ENCODE measurements at regions of chr12 and their contacts with region 1.

Region 1: DNA sequence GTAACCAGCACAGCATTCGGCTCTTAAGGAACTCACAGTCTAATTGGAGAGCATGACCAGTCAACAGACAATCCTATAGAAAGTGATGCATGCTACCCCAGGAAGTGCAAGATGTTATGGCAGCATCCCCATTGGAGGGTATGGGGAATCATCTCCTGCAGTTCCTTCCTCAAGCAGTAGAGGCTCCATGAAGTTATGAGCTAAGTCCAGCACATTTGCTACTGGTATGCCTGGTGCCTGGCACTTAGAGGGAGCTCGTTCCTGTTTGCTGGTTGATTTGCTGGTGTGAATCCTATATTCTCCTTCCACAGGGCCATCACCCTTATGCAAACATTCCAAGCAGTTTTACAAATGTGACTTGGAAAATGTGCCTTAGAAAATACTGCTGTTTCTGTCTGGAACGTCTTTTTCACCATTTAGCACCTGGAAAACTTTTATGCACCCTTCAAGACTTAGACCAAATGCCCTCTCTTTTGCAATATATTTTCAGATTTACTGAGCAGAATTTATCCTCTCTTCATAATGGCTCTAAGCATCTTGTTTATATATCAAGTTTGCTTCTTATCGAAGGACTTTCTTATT is 136.1 kb upstream of the WSCD2 start:
- DNase-seq: no peak
- ATAC-seq: peak; percentile 31
- H3K4me3 Mint-ChIP-seq: no peak overlapping the region
- H3K27ac Mint-ChIP-seq: no peak overlapping the region
- H3K4me1 Mint-ChIP-seq: no peaks in the 10 kb centered on the region
- H3K27me3 Mint-ChIP-seq: peaks cover 29% of the 10 kb centered on the region
- CTCF ChIP-seq: no peak

Region 2: DNA sequence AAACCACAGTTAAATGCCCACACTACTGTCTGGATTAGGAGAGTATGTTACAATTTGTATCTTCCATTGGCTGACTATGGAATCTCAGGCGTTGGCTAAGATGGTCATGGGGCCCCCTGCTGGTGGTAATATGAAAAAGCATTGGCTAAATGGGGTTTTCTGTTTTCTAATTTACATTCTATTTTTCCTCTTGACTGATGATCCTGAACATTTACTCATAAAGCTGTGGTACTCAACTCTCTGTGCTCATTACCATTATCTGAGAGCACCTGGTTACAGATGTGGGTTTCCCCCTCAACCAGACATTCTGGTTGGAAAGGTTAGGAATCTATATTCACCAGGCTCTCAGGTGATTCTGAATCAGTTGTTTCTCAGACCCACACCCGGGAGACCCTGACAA is 201.0 kb after region 1 on chr12:
- CTCF ChIA-PET with region 1: no interaction called
- POLR2A ChIA-PET with region 1: no interaction called
- intact Hi-C with region 1: loop called (anchors 2 kb)
- DNase-seq: no peak
- ATAC-seq: peak; percentile 66
- H3K4me3 Mint-ChIP-seq: no peak overlapping the region
- H3K27ac Mint-ChIP-seq: no peak overlapping the region
- H3K4me1 Mint-ChIP-seq: peaks cover 13% of the 10 kb centered on the region
- H3K27me3 Mint-ChIP-seq: no peaks in the 10 kb centered on the region
- CTCF ChIP-seq: no peak

Region 3: DNA sequence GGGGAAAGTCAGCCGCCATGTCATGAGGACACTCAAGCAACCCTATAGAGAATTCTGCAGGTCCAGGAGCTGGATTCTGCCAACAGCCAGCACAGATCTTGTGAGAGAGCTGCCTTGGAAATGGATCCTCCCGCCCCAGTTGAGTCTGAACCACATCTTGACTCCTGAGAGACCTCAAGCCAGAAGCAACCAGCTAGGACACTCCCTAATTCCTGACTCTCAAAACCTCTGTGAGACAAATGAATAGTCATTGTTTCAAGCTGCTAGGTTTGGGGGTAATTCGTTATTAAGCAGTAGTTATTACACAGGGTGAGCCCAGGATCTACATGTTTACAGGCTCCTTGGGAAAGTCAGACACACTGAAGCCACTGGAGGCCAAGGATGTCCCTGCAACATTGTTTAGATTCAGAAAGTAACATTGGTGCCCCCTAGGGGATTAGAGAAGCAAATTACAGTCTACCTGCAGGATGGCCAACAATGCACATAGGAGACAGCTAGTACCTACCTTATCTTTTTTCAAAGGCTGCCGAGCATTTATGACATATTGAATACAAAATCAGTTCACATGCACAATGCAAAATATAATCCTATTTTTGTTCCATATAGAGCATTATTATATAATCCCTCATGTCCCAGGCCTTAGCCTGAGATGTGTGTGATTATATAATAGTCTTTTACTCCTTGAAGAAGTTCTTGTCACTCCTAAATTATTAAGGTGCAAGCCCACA is 464.2 kb after region 1 on chr12:
- CTCF ChIA-PET with region 1: interaction called, 5 read pairs
- POLR2A ChIA-PET with region 1: no interaction called
- intact Hi-C with region 1: loop called (anchors 1 kb)
- DNase-seq: no peak
- ATAC-seq: no peak
- H3K4me3 Mint-ChIP-seq: no peak overlapping the region
- H3K27ac Mint-ChIP-seq: no peak overlapping the region
- H3K4me1 Mint-ChIP-seq: no peaks in the 10 kb centered on the region
- H3K27me3 Mint-ChIP-seq: peaks cover 11% of the 10 kb centered on the region
- CTCF ChIP-seq: no peak

Region 4: GRCh38 chr12:108618079-108618952 is 625.4 kb after region 1 on chr12:
- CTCF ChIA-PET with region 1: no interaction called
- POLR2A ChIA-PET with region 1: no interaction called
- intact Hi-C with region 1: loop called (anchors 5 kb)
- DNase-seq: peak; percentile 76
- ATAC-seq: peak; percentile 40
- H3K4me3 Mint-ChIP-seq: peak overlapping the region; percentile 19
- H3K27ac Mint-ChIP-seq: peak overlapping the region; percentile 53
- H3K4me1 Mint-ChIP-seq: peaks cover 70% of the 10 kb centered on the region
- H3K27me3 Mint-ChIP-seq: no peaks in the 10 kb centered on the region
- CTCF ChIP-seq: peak; percentile 60

Region 5: GRCh38 chr12:109393437-109394345 is 1400.7 kb after region 1 on chr12:
- CTCF ChIA-PET with region 1: no interaction called
- POLR2A ChIA-PET with region 1: no interaction called
- intact Hi-C with region 1: loop called (anchors 5 kb)
- DNase-seq: no peak
- ATAC-seq: no peak
- H3K4me3 Mint-ChIP-seq: no peak overlapping the region
- H3K27ac Mint-ChIP-seq: no peak overlapping the region
- H3K4me1 Mint-ChIP-seq: no peaks in the 10 kb centered on the region
- H3K27me3 Mint-ChIP-seq: peaks cover 12% of the 10 kb centered on the region
- CTCF ChIP-seq: no peak

Measured in activated B cell treated with CpG ODN at 0.5 μM for 24 hours (primary cell).